ENCODE measurements at regions of chr12 and their contacts with region 1.

Region 1: GRCh38 chr12:89524541-89525285 is at the start of gene GALNT4:
- DNase-seq: peak; percentile 61 to 78 (median 74)
- ATAC-seq: peak; percentile 87
- H3K4me3 ChIP-seq: peak within 1 kb of the TSS; percentile 90
- H3K4me3 Mint-ChIP-seq: peak within 1 kb of the TSS; percentile 87 to 98 (median 96)
- H3K27ac ChIP-seq: peak within 1 kb of the TSS; percentile 77
- H3K27ac Mint-ChIP-seq: peak within 1 kb of the TSS; percentile 67 to 96 (median 89)
- H3K4me1 ChIP-seq: peaks cover 30 to 35% of the 10 kb centered on the region in 2 donors
- H3K4me1 Mint-ChIP-seq: peaks cover 30 to 66% (median 55%) of the 10 kb centered on the region in 7 donors
- H3K27me3 ChIP-seq: no peaks in the 10 kb centered on the region
- H3K27me3 Mint-ChIP-seq: no peaks in the 10 kb centered on the region
- total RNA-seq, gene GALNT4: 6.0 to 14.5 (median 9.9) TPM

Region 2: DNA sequence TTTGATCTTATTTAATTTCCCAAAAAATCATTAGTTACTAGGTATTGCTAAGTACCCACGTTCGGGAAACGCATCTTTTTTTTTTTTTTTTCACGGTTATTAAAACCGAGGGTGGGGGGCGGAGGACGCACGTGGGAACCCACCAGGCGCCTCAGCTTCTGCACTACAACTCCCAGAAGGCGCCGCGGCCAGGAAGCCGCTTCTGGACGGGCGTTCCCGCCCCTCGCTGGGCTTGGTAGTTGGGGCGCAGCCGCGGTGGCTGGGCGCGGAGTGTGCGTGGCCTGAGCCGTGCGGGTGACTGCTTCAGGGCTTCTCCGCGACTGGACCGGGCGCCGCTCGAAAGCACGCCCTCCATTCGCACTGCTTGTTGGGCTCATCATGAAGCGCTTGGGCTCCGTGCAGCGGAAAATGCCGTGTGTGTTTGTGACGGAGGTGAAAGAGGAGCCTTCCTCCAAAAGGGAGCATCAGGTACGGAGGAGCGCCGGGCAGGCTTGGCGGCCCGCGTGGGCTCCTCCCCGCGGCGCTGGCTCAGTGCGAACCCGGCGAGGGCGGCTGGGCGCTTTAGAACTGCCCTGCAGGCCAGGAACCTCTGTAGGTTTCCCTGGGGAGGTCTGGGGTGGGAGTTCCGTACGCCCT is 1489.3 kb before region 1 on chr12:
- CTCF ChIA-PET with region 1: no interaction called
- POLR2A ChIA-PET with region 1: no interaction called
- intact Hi-C with region 1: loop called (anchors 1 kb)
- DNase-seq: peak; percentile 75 to 89 (median 85)
- ATAC-seq: peak; percentile 99
- H3K4me3 ChIP-seq: peak overlapping the region; percentile 89
- H3K4me3 Mint-ChIP-seq: peak overlapping the region; percentile 92 to 99 (median 96)
- H3K27ac ChIP-seq: peak overlapping the region; percentile 81
- H3K27ac Mint-ChIP-seq: peak overlapping the region; percentile 86 to 98 (median 92)
- H3K4me1 ChIP-seq: peaks cover 14 to 19% of the 10 kb centered on the region in 2 donors
- H3K4me1 Mint-ChIP-seq: peaks cover 22 to 64% (median 53%) of the 10 kb centered on the region in 7 donors
- H3K27me3 ChIP-seq: no peaks in the 10 kb centered on the region
- H3K27me3 Mint-ChIP-seq: no peaks in the 10 kb centered on the region

Region 3: DNA sequence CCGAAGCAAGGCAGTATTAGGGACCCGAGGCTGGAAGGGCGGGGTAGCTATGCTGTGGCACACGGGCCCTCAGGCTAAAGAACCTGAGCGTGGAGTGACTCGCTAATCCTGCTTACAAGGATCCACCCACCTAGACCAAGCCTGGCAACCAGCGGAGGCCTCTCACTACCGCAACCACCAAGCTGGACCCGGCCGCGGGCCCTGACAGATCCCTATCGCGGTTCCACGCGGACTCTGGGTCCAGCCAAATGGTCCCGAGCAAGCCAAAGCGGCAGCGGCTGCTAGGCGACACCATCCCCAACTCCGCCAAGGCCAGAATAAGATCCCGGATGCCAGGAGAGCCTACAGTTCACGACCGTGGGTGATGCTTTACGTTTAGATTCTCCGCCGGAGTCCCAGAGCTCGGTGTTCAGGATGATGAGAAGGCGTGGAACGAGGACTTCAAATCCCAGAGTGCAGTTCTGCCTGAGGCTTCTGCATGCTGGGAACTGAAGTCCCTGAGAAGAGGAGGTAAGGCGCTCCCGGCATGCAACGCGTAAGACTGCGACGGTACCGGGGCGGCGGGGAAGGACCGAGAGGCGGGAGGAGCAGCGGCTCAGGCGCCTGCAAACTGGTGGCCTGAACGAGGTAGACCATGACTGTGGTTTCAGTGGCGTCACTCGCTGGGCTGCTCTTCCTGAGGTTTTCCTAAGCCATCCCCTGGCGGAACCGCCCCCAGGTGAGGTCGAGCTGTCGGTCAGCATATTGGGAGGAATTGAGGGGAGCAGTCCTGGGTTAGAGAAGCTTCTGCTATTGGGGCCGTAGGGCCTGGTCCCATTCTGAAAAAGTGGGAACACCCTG is 1382.7 kb before region 1 on chr12 and contains the starts of genes CEP290 and TMTC3:
- CTCF ChIA-PET with region 1: no interaction called
- POLR2A ChIA-PET with region 1: no interaction called
- intact Hi-C with region 1: loop called (anchors 1 kb)
- DNase-seq: peak; percentile 69 to 98 (median 94)
- ATAC-seq: peak; percentile 97
- H3K4me3 ChIP-seq: peak within 1 kb of the TSS; percentile 82
- H3K4me3 Mint-ChIP-seq: peak within 1 kb of the TSS; percentile 88 to 100 (median 96)
- H3K27ac ChIP-seq: peak within 1 kb of the TSS; percentile 84
- H3K27ac Mint-ChIP-seq: peak within 1 kb of the TSS; percentile 66 to 99 (median 94)
- H3K4me1 ChIP-seq: peaks cover 12 to 14% of the 10 kb centered on the region in 2 donors
- H3K4me1 Mint-ChIP-seq: peaks cover 26 to 68% (median 45%) of the 10 kb centered on the region in 7 donors
- H3K27me3 ChIP-seq: no peaks in the 10 kb centered on the region
- H3K27me3 Mint-ChIP-seq: no peaks in the 10 kb centered on the region
- total RNA-seq, gene CEP290: 14.7 to 29.5 (median 19.5) TPM
- total RNA-seq, gene TMTC3: 6.4 to 11.1 (median 7.5) TPM

Region 4: DNA sequence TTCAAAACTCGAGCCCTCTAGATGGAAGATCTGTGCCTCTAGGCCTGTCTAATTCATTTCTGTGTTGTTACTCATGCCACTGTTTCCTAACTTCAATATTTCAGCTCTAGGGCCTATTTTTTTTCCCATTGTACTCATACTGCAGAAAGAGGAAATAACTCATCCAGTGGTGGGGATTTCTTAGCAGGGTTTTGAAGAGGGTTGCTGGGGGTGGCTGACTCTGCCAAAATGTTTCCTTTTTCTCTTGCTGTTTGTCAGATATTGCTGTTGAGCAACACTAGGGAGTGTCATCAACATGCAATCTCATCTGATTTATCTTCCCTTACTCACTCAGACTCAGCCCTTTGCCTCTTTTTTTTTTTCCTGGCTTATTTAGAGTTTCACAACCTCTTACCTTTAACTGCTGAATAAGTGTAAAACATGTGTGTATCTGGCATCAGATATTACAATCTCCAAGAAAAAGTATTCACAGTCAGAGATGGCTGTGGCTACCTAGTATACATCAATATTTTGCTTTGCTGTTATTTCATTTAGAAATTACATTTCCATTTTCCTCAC is 361.9 kb before region 1 on chr12:
- CTCF ChIA-PET with region 1: no interaction called
- POLR2A ChIA-PET with region 1: no interaction called
- intact Hi-C with region 1: loop called in 1 of 2 experiments (anchors 5 kb)
- DNase-seq: peak in 1 of 9 donors; percentile 54
- ATAC-seq: peak; percentile 77
- H3K4me3 ChIP-seq: no peak overlapping the region
- H3K4me3 Mint-ChIP-seq: no peak overlapping the region
- H3K27ac ChIP-seq: no peak overlapping the region
- H3K27ac Mint-ChIP-seq: no peak overlapping the region
- H3K4me1 ChIP-seq: peaks cover 0 to 9% of the 10 kb centered on the region in 2 donors
- H3K4me1 Mint-ChIP-seq: peaks cover 10 to 31% (median 20%) of the 10 kb centered on the region in 7 donors
- H3K27me3 ChIP-seq: no peaks in the 10 kb centered on the region
- H3K27me3 Mint-ChIP-seq: no peaks in the 10 kb centered on the region

Region 5: DNA sequence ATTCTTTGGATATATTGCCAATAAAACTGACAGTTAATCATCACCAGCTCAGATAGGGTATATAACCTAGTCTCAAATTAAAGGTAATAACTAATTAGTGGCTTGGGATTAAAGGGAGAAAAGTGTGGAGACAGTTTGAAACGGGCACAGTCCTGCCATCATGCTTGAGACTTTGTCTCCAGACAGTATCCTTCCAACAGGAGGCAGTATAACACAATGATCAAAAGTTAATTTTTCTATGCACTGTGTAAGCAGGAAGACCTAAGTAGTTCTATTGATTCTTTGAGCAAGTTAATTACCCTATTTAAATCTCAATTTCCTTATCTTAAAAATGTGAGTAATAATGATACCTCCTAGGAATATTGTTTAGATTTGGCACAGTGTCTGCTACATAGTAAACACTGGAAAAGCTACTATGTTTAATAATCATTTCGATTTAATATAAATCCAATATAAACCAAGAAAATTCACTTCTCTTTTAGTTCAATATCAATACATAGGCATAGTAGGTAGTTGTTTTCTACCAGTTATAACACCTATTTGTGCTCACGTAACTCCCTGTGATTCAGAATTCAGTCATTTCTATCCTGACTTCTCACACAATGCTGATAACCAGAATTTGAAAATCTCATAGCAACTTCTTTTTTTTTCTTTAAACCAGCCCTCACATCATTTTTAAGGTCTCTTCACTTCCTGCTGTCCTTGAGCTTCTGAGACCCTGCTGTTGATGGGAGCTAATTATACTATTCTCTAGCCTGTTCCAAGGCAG is 53.8 kb before region 1 on chr12:
- CTCF ChIA-PET with region 1: interaction called, 11 read pairs
- POLR2A ChIA-PET with region 1: interaction called, 5 read pairs
- intact Hi-C with region 1: loop called (anchors 1 kb)
- DNase-seq: peak in 6 of 9 donors; percentile 28 to 56 (median 46)
- ATAC-seq: peak; percentile 86
- H3K4me3 ChIP-seq: no peak overlapping the region
- H3K4me3 Mint-ChIP-seq: peak overlapping the region in 1 of 10 donors; percentile 35
- H3K27ac ChIP-seq: no peak overlapping the region
- H3K27ac Mint-ChIP-seq: peak overlapping the region in 5 of 9 donors; percentile 12 to 85 (median 48)
- H3K4me1 ChIP-seq: peaks cover 23 to 31% of the 10 kb centered on the region in 2 donors
- H3K4me1 Mint-ChIP-seq: peaks cover 26 to 63% (median 44%) of the 10 kb centered on the region in 7 donors
- H3K27me3 ChIP-seq: no peaks in the 10 kb centered on the region
- H3K27me3 Mint-ChIP-seq: no peaks in the 10 kb centered on the region

Region 6: DNA sequence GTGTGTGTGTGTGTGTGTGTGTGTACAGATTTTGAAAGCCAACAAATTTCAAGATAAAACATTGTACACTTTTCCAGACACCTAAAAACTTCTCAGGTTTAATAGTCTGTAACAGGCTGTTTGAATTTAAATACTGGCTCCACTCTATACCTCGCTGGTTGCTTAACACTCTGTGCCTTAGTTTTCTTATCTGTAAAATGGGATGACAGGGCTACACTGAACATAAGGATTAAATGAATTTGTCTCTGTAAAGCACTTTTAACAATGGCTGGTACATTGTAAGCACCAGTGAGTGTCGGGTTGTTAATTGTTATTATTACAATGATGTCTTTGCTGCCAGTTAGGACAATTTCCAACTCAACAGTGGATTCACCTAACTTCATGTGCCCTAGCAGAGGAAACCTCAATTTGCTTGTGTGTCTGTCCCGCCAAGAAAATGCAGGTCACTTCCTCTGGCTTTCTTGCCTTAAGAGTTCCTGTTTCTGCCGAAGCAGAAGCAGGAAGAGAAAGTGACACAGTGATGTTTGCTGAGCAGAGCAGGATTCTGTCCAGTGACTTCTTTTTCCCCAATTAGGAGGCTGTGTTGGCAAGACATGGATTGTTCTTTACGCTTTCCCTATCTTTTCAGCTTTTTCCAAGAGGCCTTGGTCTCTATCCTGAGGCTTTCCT is 337.9 kb after region 1 on chr12:
- CTCF ChIA-PET with region 1: no interaction called
- POLR2A ChIA-PET with region 1: no interaction called
- intact Hi-C with region 1: loop called in 1 of 2 experiments (anchors 1 kb)
- DNase-seq: peak in 7 of 9 donors; percentile 46 to 66 (median 57)
- ATAC-seq: peak; percentile 49
- H3K4me3 ChIP-seq: peak overlapping the region; percentile 44
- H3K4me3 Mint-ChIP-seq: peak overlapping the region; percentile 78 to 86 (median 82)
- H3K27ac ChIP-seq: peak overlapping the region; percentile 87
- H3K27ac Mint-ChIP-seq: peak overlapping the region; percentile 96 to 99 (median 98)
- H3K4me1 ChIP-seq: peaks cover 23 to 30% of the 10 kb centered on the region in 2 donors
- H3K4me1 Mint-ChIP-seq: peaks cover 40 to 72% (median 53%) of the 10 kb centered on the region in 7 donors
- H3K27me3 ChIP-seq: no peaks in the 10 kb centered on the region
- H3K27me3 Mint-ChIP-seq: no peaks in the 10 kb centered on the region